Sigmoid colon (tissue), 7 donors: ENCODE measurements at regions of chr6 and their contacts with region 1.

Region 1: DNA sequence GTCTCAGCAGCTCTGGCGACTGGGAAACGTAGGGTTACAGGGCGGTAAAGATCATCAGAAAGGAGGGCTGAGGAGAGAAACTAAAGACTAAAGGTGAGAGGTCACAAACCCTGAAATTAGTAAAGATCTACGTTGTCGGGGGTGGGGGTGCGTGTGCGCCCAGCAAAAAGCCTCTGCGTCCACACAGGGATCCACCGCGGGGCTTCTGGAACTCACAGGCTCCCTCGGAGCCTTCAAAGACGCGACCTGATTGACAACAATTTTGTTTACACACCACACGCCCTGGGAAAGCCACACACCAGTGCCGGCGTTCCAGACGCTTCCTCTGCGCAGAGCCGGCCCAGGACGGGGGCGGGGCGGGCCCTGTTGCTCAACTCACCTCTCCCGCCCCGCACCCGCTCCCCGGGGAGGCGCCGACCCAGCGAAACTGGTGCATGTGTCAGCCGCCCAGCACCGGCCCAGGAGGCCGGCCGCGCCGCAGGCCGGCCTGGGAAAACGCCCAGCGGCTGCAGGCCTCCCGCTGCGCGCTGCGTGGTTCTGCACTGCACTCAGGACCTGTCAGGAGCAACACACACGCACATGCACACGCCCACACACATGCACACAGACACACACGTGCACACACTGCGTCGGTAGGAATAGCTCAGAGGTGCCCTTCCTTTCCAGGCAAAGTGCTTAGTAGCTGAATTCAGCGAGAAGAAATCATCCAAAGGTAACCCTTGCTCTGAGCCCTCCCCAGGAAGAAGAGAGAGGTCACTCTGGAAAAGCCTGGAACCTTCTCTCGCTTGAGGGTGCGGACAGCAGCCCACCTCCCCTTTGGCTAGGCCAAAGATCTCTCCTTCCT is 57.2 kb upstream of the ARID1B start:
- DNase-seq: peak; percentile 98
- H3K4me3 ChIP-seq: peak overlapping the region; percentile 28 to 51 (median 41)
- H3K27ac ChIP-seq: peak overlapping the region; percentile 80 to 92 (median 90)
- H3K4me1 ChIP-seq: peaks cover 0 to 25% (median 24%) of the 10 kb centered on the region in 4 donors
- H3K27me3 ChIP-seq: no peaks in the 10 kb centered on the region
- CTCF ChIP-seq: no peak
- EP300 ChIP-seq: peak in 1 of 4 donors; percentile 63
- POLR2A ChIP-seq: peak; percentile 21 to 33

Region 2: GRCh38 chr6:156767603-156768467 is 47.9 kb after region 1 on chr6:
- intact Hi-C with region 1: loop called (anchors 1 kb)
- DNase-seq: no peak
- H3K4me3 ChIP-seq: no peak overlapping the region
- H3K27ac ChIP-seq: no peak overlapping the region
- H3K4me1 ChIP-seq: no peaks in the 10 kb centered on the region
- H3K27me3 ChIP-seq: no peaks in the 10 kb centered on the region
- CTCF ChIP-seq: no peak
- EP300 ChIP-seq: no peak
- POLR2A ChIP-seq: no peak

Region 3: DNA sequence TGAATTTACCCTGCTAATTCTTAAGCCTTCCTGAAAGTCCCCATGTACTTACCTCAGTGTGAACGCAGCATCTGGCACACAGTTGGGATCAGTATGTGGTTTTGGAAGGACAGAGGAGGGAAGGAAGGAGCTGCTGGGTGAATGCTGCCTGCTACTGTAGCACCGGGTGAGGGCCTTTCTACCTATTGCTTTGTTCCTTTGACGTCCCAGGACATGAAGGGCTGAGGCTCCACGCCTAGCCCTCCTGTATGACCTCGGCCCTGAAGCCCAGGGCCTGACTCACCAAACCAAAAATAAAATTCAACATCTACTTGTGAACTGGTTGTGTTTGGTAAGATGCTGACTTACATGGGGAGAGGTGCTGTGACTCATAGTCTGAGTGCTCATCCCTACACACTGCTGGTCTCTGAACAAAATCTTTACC is 108.3 kb after region 1 on chr6:
- intact Hi-C with region 1: no loop called
- DNase-seq: no peak
- H3K4me3 ChIP-seq: no peak overlapping the region
- H3K27ac ChIP-seq: peak overlapping the region; percentile 45 to 76 (median 60)
- H3K4me1 ChIP-seq: peaks cover 0 to 75% (median 50%) of the 10 kb centered on the region in 4 donors
- H3K27me3 ChIP-seq: no peaks in the 10 kb centered on the region
- CTCF ChIP-seq: no peak
- EP300 ChIP-seq: no peak
- POLR2A ChIP-seq: no peak

Region 4: DNA sequence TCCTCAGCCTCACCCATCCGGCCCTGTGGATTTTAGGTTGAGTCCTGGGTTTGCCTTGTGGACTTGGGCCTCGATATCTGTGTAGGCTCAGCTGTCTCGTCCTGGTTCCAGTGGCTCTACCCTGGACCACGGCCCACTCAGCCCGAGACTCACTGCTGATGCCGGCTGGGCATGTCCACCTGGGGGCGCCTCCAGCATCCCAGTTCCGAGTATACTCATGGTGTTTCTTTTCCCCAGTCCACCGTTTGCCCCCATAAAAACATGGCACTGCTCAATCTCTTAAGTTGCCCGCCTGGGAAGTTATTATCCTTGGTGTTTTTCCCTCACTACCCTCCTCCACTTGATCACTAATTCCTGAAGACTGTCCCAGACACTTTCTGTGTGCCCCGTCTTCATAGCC is 156.4 kb after region 1 on chr6:
- intact Hi-C with region 1: no loop called
- DNase-seq: no peak
- H3K4me3 ChIP-seq: no peak overlapping the region
- H3K27ac ChIP-seq: no peak overlapping the region
- H3K4me1 ChIP-seq: peaks cover 0 to 60% (median 46%) of the 10 kb centered on the region in 4 donors
- H3K27me3 ChIP-seq: no peaks in the 10 kb centered on the region
- CTCF ChIP-seq: no peak
- EP300 ChIP-seq: no peak
- POLR2A ChIP-seq: no peak

Region 5: GRCh38 chr6:157079771-157080170 is 359.8 kb after region 1 on chr6:
- intact Hi-C with region 1: no loop called
- DNase-seq: no peak
- H3K4me3 ChIP-seq: no peak overlapping the region
- H3K27ac ChIP-seq: no peak overlapping the region
- H3K4me1 ChIP-seq: peaks cover 0 to 25% (median 8%) of the 10 kb centered on the region in 4 donors
- H3K27me3 ChIP-seq: no peaks in the 10 kb centered on the region
- CTCF ChIP-seq: no peak
- EP300 ChIP-seq: no peak
- POLR2A ChIP-seq: no peak